KBM-7 (cell line): ENCODE measurements at regions of chr6 and their contacts with region 1.

Region 1: DNA sequence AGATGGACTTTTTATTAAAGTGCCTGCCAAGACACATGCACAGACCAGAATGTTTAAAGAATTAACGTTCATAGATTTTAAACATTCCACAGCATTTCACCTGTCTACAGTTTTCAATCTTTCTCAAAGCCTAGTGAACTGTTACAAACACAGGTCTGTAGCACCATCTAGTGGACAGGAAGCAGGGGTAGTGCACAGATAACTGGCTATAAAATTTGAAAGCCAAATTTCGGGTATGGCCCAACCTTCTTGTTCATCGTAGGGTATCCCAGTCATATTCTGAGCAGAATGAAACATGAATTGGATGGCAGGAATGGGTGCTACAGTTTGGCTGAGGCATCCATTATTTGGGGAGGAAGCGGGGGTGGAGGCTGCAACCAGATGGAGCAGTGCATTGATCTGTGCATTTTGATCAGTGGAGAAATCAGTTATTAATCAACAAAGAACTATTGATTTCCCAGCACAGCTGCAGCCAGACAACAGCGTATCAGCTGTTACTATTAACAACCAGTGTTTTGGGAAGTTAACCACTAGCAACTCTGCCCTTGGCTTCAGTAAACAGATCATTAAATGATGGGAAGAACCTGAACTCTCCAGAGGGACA is 56.1 kb upstream of the B3GAT2 start:
- DNase-seq: peak; percentile 37

Region 2: GRCh38 chr6:70369332-70369950 is 643.5 kb before region 1 on chr6:
- in situ Hi-C with region 1: loop called (anchors 25 kb)
- DNase-seq: peak; percentile 82